ENCODE measurements at regions of chr19 and their contacts with region 1.

Region 1: GRCh38 chr19:46513461-46514236 is 18.0 kb upstream of the PNMA8B start:
- DNase-seq: peak; percentile 57
- H3K4me3 ChIP-seq: no peak overlapping the region
- H3K27ac ChIP-seq: no peak overlapping the region
- H3K4me1 ChIP-seq: peaks cover 5% of the 10 kb centered on the region
- H3K27me3 ChIP-seq: no peaks in the 10 kb centered on the region
- CTCF ChIP-seq: peak; percentile 68 to 97

Region 2: DNA sequence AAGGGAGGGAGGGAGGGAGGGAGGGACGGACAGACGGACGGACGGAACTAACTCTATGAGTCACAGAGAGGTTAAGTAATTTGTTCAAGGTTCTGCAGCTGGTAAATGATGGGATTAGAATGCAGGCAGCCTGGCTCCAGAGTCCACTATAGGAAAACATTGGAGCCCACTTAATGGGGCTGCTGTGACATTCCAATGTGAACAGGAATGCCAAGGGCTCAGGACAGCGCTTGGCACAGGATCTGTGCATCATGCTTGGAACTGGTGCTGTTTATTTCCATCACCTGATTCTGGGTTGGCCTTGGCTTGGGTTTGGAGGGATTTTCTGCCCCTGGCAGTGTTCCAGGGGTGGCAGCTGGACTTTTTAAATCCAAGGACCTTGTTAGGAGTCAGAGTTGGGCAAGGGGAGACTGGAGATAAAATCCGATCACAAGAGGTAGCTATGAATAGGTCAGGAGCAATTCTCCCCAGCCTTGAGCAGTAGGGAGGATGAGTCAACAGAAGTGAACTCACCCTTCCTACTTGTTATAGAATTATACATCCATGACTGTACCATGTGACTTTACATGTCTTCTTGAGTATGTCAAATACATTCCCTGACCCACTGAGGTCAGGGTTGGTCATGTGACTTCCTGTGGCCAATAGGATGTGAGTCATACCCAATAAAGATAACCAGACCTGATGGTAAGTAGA is 224.6 kb before region 1 on chr19:
- CTCF ChIA-PET with region 1: no interaction called
- dilution Hi-C with region 1: no loop called
- in situ Hi-C with region 1: loop called (anchors 10 kb)
- intact Hi-C with region 1: no loop called
- DNase-seq: peak; percentile 94
- H3K4me3 ChIP-seq: no peak overlapping the region
- H3K27ac ChIP-seq: peak overlapping the region; percentile 45
- H3K4me1 ChIP-seq: peaks cover 10% of the 10 kb centered on the region
- H3K27me3 ChIP-seq: no peaks in the 10 kb centered on the region
- CTCF ChIP-seq: no peak

Region 3: DNA sequence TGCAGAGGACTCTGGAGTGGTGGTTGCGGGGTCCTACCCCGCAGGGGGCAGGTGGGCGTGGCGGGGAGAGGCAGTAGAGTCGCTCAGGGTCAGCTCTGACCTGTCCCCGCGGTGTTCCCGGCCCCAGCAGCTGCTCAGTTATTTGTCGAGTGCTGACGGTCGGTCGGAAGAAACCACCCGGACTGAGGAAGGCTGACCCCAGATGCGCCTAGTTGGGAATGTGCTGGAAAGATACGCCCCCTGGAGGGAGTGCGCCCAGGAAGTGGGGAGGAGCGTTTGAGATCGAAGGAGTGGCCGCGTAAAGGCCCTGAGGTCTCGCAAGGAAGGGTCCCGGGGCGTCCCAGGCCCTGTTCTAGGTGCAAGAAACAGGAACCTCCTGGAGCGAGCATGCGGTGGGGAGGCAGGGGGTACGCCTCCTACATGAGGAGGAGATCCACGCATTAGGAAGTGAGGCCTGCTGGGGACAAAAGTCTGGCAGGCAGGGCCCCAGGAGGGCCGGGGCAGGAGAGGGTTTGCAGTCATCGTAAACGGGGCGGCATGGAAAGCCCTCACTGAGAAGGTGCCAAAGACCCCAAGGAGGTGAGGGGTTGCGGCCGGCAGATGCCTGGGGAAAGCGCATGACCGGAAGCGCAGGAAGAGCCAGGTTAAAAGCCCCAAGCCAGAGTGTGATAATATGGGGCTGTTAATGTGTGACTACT is 109.4 kb before region 1 on chr19:
- CTCF ChIA-PET with region 1: no interaction called
- dilution Hi-C with region 1: no loop called
- in situ Hi-C with region 1: no loop called
- intact Hi-C with region 1: loop called (anchors 1 kb)
- DNase-seq: no peak
- H3K4me3 ChIP-seq: peak overlapping the region; percentile 18 to 49 (median 19)
- H3K27ac ChIP-seq: peak overlapping the region; percentile 14
- H3K4me1 ChIP-seq: peaks cover 29% of the 10 kb centered on the region
- H3K27me3 ChIP-seq: no peaks in the 10 kb centered on the region
- CTCF ChIP-seq: peak in 1 of 2 donors; percentile 17

Region 4: DNA sequence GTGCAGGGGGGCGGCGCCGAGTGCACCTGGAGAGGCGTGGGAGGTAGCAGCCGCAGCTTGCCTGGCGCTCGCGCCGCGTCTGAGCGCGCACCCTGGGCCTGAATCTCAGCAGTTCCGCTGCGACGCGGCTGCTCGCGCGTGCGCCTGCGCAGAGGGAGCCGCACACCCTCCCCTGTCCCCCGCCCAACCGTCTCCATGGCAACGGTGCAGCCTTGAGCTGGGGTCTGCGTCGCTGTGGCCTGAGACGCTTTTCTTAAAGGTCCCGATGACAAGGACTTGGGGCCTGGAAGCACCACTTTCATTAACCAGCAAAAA is 17.9 kb before region 1 on chr19 and contains the start of gene PNMA8B:
- CTCF ChIA-PET with region 1: no interaction called
- dilution Hi-C with region 1: no loop called
- in situ Hi-C with region 1: no loop called
- intact Hi-C with region 1: loop called (anchors 1 kb)
- DNase-seq: peak; percentile 81
- H3K4me3 ChIP-seq: peak within 1 kb of the TSS in 1 of 3 experiments; percentile 2
- H3K27ac ChIP-seq: no peak within 1 kb of the TSS
- H3K4me1 ChIP-seq: peaks cover 20% of the 10 kb centered on the region
- H3K27me3 ChIP-seq: no peaks in the 10 kb centered on the region
- CTCF ChIP-seq: no peak
- total RNA-seq, gene PNMA8B: 0.12 to 0.67 TPM

Measured in mammary epithelial cell (primary cell).